Body of pancreas (tissue), 4 donors: ENCODE measurements at regions of chr18 and their contacts with region 1.

Region 1: GRCh38 chr18:623761-624620 is 27.2 kb downstream of the CLUL1 start:
- DNase-seq: peak; percentile 74 to 87 (median 76)
- ATAC-seq: peak; percentile 76
- H3K4me3 ChIP-seq: no peak overlapping the region
- H3K27ac ChIP-seq: no peak overlapping the region
- H3K4me1 ChIP-seq: peaks cover 3% of the 10 kb centered on the region
- H3K27me3 ChIP-seq: no peaks in the 10 kb centered on the region
- CTCF ChIP-seq: peak; percentile 46 to 82 (median 58)
- POLR2A ChIP-seq: no peak

Region 2: DNA sequence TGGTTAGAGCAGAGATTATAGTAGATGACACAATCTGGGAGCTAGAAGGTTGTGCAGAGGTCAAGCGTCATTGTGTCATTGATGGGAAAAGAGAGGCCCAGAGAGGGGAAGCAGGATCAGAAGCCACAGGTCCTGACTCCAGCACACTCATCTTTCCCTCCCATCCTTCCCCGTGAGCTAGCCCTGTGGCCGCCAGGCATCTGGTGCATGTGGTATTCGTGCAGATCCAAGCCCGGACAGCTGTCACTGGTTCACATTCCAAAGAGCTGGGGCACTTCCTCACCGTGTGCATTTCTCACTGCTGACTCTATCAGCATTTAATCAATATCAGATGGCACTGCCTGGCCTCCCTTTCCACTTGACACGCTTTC is 262.1 kb before region 1 on chr18:
- intact Hi-C with region 1: no loop called
- DNase-seq: peak in 1 of 4 donors; percentile 27
- ATAC-seq: no peak
- H3K4me3 ChIP-seq: no peak overlapping the region
- H3K27ac ChIP-seq: no peak overlapping the region
- H3K4me1 ChIP-seq: no peaks in the 10 kb centered on the region
- H3K27me3 ChIP-seq: no peaks in the 10 kb centered on the region
- CTCF ChIP-seq: no peak
- POLR2A ChIP-seq: no peak

Region 3: DNA sequence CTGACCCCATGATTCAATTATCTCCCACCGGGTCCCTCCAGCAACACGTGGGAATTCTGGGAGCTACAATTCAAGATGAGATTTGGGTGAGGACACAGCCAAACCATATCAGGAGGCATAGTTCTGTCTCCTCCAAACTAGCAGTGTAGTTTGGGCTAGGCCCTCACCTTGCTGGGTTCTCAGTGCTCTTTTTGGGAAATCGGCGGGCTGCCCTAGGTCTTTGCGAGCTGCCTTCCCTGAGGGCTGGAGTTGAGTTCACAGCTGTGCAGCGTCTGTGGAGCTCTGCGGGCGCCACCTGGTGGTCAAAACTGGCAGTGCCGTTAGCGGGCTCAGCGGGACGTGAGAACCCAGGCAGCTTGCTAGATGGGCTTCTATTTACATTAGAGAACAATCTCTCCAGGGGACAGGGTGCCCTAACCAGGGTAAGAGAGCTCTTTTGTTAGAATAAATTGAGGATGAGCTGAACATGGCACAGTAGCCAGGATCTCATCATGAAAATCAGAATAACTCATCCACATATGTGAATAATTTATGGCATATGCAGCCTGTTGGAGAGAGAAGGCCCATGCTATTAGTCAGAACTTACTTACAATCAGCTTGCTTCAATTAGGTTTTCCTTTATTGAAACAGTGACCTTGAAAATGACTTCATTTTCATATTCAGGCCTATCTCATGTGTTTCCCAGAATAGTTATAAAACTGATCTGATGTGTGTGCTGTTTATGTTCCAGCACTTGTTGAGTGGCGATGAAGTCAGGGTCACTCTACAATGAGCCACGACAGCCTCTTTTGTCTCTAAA is 215.4 kb after region 1 on chr18:
- intact Hi-C with region 1: loop called (anchors 10 kb)
- DNase-seq: peak; percentile 82 to 89 (median 85)
- ATAC-seq: peak; percentile 93
- H3K4me3 ChIP-seq: no peak overlapping the region
- H3K27ac ChIP-seq: peak overlapping the region in 1 of 4 donors; percentile 34
- H3K4me1 ChIP-seq: peaks cover 13% of the 10 kb centered on the region
- H3K27me3 ChIP-seq: no peaks in the 10 kb centered on the region
- CTCF ChIP-seq: peak; percentile 85 to 98 (median 88)
- POLR2A ChIP-seq: no peak